Activated B cell treated with CpG ODN at 0.5 μM for 24 hours (primary cell): ENCODE measurements at regions of chr17 and their contacts with region 1.

Region 1: DNA sequence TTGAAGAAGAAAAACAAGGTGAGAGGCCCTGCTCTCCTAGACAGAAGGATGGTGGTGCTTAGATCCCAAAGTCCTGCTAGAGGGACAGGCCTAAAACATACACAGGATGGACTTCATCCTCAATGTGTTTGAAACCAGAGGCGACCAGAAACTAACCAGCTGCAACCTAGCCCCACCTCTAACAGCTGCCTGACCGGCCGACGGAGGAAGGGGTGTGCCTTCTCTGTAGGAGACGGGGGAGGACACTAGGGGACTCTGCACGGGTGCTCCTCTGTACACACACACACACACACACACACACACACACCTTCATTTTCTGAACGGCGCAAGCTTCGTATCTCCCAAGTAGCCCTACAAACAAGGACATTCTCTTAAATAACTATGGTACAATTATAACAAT is 24.3 kb upstream of the PITPNM3 start:
- DNase-seq: no peak
- ATAC-seq: no peak
- H3K4me3 Mint-ChIP-seq: no peak overlapping the region
- H3K27ac Mint-ChIP-seq: no peak overlapping the region
- H3K4me1 Mint-ChIP-seq: peaks cover 16% of the 10 kb centered on the region
- H3K27me3 Mint-ChIP-seq: no peaks in the 10 kb centered on the region
- CTCF ChIP-seq: no peak

Region 2: DNA sequence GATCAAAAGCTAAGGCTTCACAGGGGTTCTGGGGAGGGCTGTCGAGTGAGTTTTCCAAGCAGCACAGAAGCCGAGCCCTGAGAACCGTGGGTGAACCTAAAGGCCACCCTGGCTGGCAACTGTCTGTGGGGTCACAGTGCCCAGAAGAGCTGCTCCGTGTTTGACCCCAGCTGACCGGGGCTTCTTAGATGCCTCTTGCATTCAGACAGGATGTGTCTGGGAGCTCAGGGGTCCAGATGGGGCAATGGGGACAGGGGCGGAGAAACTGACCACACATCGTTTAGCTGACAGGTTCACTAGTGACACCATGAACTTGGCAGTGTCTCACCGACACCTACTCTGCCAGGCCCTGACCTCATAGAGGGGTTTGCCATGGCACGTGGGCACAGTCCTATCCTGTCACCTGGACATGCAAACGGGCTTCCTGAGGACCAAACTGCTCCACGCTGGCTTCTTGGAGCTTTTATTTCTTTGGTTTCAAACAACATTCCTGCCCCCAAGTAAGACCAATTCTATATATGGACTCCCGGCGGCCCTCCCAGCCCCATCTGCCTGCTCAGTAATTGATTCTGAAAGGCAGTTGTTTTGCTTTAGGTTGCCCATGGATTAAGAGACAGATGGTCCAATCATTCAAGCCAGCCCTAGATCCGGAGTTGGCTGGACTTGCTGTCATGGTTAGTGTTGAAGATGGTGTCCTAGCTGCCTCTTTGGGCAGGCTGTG is 488.3 kb before region 1 on chr17:
- CTCF ChIA-PET with region 1: no interaction called
- POLR2A ChIA-PET with region 1: no interaction called
- intact Hi-C with region 1: no loop called
- DNase-seq: no peak
- ATAC-seq: no peak
- H3K4me3 Mint-ChIP-seq: no peak overlapping the region
- H3K27ac Mint-ChIP-seq: no peak overlapping the region
- H3K4me1 Mint-ChIP-seq: no peaks in the 10 kb centered on the region
- H3K27me3 Mint-ChIP-seq: no peaks in the 10 kb centered on the region
- CTCF ChIP-seq: no peak

Region 3: DNA sequence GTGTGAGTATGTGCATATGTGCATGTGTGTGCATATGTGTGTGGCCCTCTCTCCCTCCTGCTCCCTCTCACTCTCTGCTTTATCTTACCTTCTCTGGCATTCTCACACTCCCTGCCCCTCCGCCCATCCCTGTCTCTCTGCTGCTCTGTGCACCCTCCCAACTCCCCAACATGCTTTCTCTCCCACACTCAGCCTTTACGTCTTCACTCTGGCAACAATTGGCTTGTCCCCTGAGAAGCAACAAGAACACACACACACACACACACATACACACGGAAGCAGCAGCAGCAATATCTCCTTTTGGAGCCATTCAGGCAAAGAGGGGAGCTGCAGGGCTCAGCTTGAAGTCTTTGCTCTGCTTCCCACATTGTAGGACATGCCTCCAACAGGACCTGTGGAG is 52.1 kb before region 1 on chr17:
- CTCF ChIA-PET with region 1: no interaction called
- POLR2A ChIA-PET with region 1: interaction called, 11 read pairs
- intact Hi-C with region 1: no loop called
- DNase-seq: no peak
- ATAC-seq: no peak
- H3K4me3 Mint-ChIP-seq: no peak overlapping the region
- H3K27ac Mint-ChIP-seq: no peak overlapping the region
- H3K4me1 Mint-ChIP-seq: no peaks in the 10 kb centered on the region
- H3K27me3 Mint-ChIP-seq: peaks cover 2% of the 10 kb centered on the region
- CTCF ChIP-seq: no peak